ENCODE measurements at regions of chr5 and their contacts with region 1.

Region 1: GRCh38 chr5:160021831-160022446 is 13.0 kb downstream of the TTC1 start:
- DNase-seq: peak; percentile 78
- H3K4me3 ChIP-seq: no peak overlapping the region
- H3K27ac ChIP-seq: peak overlapping the region; percentile 75
- H3K4me1 ChIP-seq: peaks cover 15% of the 10 kb centered on the region
- H3K27me3 ChIP-seq: no peaks in the 10 kb centered on the region
- CTCF ChIP-seq: peak; percentile 55 to 62
- POLR2A ChIP-seq: no peak

Region 2: GRCh38 chr5:160008877-160009590 is 12.9 kb before region 1 on chr5 and contains the start of gene TTC1:
- CTCF ChIA-PET with region 1: interaction called, 19 read pairs
- POLR2A ChIA-PET with region 1: no interaction called
- dilution Hi-C with region 1: no loop called
- intact Hi-C with region 1: no loop called
- DNase-seq: peak; percentile 98
- H3K4me3 ChIP-seq: peak within 1 kb of the TSS; percentile 62 to 97 (median 93)
- H3K27ac ChIP-seq: peak within 1 kb of the TSS; percentile 89
- H3K4me1 ChIP-seq: peaks cover 13% of the 10 kb centered on the region
- H3K27me3 ChIP-seq: peaks cover 0 to 3% of the 10 kb centered on the region in 2 experiments
- CTCF ChIP-seq: no peak
- POLR2A ChIP-seq: peak; percentile 95
- total RNA-seq, gene TTC1: 59.6 and 62.6 TPM in 2 replicates

Region 3: DNA sequence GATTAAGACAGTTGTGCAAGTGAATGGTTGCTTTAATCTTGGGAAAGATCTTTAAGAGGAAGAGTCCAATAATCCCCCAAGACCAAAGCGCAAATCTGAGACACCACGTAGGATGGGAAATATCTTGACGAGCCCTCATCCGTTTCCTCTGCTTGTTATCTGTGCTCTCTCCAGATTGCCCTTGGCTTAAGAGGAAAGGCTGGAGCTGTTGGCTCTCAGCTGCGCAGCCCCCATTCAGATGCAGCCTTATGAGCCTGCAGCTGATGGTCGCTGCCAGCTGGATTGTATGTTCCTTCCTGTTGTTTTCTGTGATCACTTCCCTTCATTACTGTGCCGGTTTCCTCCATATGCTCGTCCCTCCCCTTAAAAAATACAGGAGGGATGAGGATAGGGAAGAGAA is 49.6 kb after region 1 on chr5:
- CTCF ChIA-PET with region 1: interaction called, 25 read pairs
- POLR2A ChIA-PET with region 1: no interaction called
- dilution Hi-C with region 1: no loop called
- intact Hi-C with region 1: loop called (anchors 2 kb)
- DNase-seq: no peak
- H3K4me3 ChIP-seq: no peak overlapping the region
- H3K27ac ChIP-seq: peak overlapping the region; percentile 31
- H3K4me1 ChIP-seq: peaks cover 23% of the 10 kb centered on the region
- H3K27me3 ChIP-seq: no peaks in the 10 kb centered on the region
- CTCF ChIP-seq: no peak
- POLR2A ChIP-seq: no peak

Region 4: GRCh38 chr5:160133071-160133917 is 111.4 kb after region 1 on chr5:
- CTCF ChIA-PET with region 1: interaction called, 10 read pairs
- POLR2A ChIA-PET with region 1: no interaction called
- dilution Hi-C with region 1: no loop called
- intact Hi-C with region 1: no loop called
- DNase-seq: peak; percentile 9
- H3K4me3 ChIP-seq: no peak overlapping the region
- H3K27ac ChIP-seq: no peak overlapping the region
- H3K4me1 ChIP-seq: peaks cover 4% of the 10 kb centered on the region
- H3K27me3 ChIP-seq: no peaks in the 10 kb centered on the region
- CTCF ChIP-seq: no peak
- POLR2A ChIP-seq: no peak

Region 5: DNA sequence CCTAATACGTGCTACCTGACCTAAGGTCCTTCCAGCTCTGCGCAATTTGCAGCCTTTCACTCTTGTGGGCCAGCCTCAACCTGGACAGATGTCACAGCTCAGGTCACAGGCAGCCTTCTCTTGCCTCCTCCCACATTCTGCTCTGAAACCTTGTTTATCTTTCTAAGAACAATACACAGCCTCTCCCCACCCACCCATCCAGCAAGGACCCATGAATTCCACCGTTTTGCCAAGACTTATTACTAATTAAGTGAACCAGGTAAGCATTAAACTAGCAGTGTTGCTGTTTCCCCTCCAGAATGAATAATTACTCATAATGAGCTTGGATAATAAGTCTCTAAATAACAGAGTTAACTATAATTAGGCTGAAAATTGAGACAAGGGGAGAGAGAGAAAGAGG is 218.4 kb after region 1 on chr5:
- CTCF ChIA-PET with region 1: interaction called, 33 read pairs
- POLR2A ChIA-PET with region 1: no interaction called
- dilution Hi-C with region 1: no loop called
- intact Hi-C with region 1: loop called (anchors 1 kb)
- DNase-seq: no peak
- H3K4me3 ChIP-seq: no peak overlapping the region
- H3K27ac ChIP-seq: no peak overlapping the region
- H3K4me1 ChIP-seq: no peaks in the 10 kb centered on the region
- H3K27me3 ChIP-seq: no peaks in the 10 kb centered on the region
- CTCF ChIP-seq: no peak
- POLR2A ChIP-seq: no peak

Region 6: GRCh38 chr5:160342403-160342941 is 320.5 kb after region 1 on chr5:
- CTCF ChIA-PET with region 1: interaction called, 243 read pairs
- POLR2A ChIA-PET with region 1: no interaction called
- dilution Hi-C with region 1: no loop called
- intact Hi-C with region 1: loop called (anchors 1 kb)
- DNase-seq: no peak
- H3K4me3 ChIP-seq: no peak overlapping the region
- H3K27ac ChIP-seq: no peak overlapping the region
- H3K4me1 ChIP-seq: no peaks in the 10 kb centered on the region
- H3K27me3 ChIP-seq: no peaks in the 10 kb centered on the region
- CTCF ChIP-seq: no peak
- POLR2A ChIP-seq: no peak

Region 7: DNA sequence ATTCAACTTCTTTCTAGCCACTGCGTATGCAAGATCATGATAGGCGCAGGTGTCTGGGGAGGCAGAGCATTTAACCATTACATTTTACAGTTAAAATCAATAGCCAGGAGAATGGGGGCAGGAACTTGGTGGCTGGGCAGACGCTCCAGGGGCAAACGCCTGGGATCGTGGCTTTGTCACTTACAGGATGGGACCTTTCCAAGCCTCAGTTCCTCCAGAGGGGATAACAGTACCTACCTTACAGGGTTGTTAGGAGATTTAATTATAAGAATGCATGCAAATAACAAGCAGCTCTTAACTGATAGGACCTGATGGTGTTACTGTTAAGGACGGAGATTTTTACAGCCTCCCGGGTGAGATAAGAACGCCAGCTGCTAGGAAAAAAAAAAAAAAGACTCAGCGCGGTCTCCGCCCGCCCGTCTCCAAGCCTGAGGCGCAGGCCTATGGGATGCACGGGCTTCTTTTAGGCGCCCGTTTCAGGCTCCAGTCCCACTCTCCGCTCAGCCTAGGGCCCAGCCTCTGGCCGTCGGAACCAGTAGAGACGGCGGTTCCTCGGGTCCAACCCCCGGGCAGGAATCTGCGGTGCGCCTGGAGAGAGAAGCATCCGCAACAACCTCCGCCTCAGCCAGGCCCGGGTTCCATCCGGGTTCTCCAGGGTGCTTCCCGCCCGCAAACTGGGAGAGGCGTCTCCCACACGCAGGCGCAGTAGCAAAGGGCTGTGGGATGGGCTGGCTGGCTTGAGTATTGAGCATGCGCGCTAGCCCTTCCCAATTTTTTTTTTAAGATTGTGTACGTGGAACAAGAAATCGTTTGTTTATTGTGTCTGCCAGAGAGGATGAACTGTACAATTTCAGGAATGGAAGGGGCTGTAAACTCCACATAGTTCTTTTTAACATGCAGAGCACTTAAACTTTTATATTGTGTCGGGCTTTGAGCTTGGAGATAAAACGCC is 377.7 kb after region 1 on chr5 and contains the start of gene FAM200C:
- CTCF ChIA-PET with region 1: interaction called, 254 read pairs
- POLR2A ChIA-PET with region 1: no interaction called
- dilution Hi-C with region 1: no loop called
- intact Hi-C with region 1: no loop called
- DNase-seq: peak; percentile 95
- H3K4me3 ChIP-seq: peak within 1 kb of the TSS; percentile 57 to 84 (median 72)
- H3K27ac ChIP-seq: peak within 1 kb of the TSS; percentile 77
- H3K4me1 ChIP-seq: peaks cover 9% of the 10 kb centered on the region
- H3K27me3 ChIP-seq: no peaks in the 10 kb centered on the region
- CTCF ChIP-seq: no peak
- POLR2A ChIP-seq: peak; percentile 96
- total RNA-seq, gene FAM200C: 2.6 and 2.7 TPM in 2 replicates

Measured in endothelial cell of umbilical vein (primary cell).